Brain microvascular endothelial cell (primary cell): ENCODE measurements at regions of chr17 and their contacts with region 1.

Region 1: DNA sequence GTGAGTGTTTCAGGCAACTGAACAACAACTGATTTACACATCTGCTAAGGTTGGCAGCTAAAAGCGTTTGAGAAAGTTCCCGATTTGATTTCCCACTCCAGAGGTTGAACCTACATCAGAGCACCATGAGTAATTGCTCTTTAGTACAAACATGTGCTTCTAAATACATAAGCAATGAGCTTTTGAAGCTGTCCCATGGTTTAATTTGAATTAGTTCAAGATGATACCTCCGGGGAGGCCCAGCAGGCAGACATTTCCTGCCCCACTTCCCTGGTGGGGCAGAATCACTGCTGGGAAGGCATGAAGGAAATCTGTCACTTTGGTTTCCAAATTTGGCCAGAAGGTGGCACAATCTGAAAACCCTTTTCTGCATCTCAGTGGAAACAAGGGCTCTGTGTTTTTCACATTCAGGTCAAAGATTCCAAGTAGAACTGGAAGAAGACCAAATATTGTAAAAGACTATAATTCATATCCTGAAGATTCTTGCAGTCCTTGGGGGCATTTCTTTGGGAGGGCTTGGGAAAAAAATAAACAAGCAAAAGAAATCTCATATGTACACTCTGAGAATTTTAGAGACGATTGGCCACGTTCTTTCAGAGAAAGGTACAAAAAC is 176.2 kb upstream of the FAM20A start:
- DNase-seq: peak; percentile 71
- H3K4me3 ChIP-seq: no peak overlapping the region
- H3K27ac ChIP-seq: no peak overlapping the region
- H3K27me3 ChIP-seq: no peaks in the 10 kb centered on the region
- CTCF ChIP-seq: peak; percentile 77

Region 2: DNA sequence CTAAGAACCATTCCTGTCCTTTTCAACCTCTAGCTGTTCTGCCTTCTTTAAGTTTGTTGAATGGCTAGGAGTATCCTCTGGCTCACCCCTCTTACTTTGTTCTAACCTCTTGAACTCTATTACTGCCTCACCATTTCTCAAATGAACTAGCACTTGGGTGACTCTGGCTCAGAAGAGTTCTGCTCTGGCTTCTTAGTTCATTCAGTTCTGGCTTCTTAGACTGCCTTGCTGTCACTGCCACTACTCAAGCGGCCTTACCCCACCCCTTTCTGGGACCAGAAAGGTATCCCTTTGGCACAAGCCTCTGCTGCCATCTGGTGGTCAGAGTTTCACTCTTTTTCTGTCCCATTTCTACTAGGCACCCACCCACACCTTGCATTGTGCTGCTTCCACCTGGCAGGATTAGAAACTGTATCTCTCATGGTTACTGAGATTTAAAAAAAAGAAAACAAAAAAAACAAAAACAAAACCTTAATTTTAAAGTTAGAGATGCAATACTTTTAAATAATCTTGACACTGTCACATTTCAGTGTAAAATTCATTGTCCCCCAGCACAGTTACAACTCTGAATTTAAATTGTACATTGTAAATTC is 458.1 kb after region 1 on chr17:
- in situ Hi-C with region 1: loop called (anchors 25 kb)
- DNase-seq: peak; percentile 84
- H3K4me3 ChIP-seq: no peak overlapping the region
- H3K27ac ChIP-seq: no peak overlapping the region
- H3K27me3 ChIP-seq: no peaks in the 10 kb centered on the region
- CTCF ChIP-seq: peak; percentile 86